GM12878 (cell line): ENCODE measurements at regions of chr7 and their contacts with region 1.

Region 1: GRCh38 chr7:85125651-85126131 is 61.2 kb downstream of the SEMA3D start:
- DNase-seq: no peak
- ATAC-seq: no peak
- H3K4me3 ChIP-seq: no peak overlapping the region
- H3K27ac ChIP-seq: no peak overlapping the region
- H3K4me1 ChIP-seq: no peaks in the 10 kb centered on the region
- H3K27me3 ChIP-seq: no peaks in the 10 kb centered on the region
- CTCF ChIP-seq: no peak
- EP300 ChIP-seq: no peak
- POLR2A ChIP-seq: no peak
- RAD21 ChIP-seq: no peak

Region 2: GRCh38 chr7:85070967-85071628 is 54.6 kb before region 1 on chr7:
- CTCF ChIA-PET with region 1: no interaction called
- POLR2A ChIA-PET with region 1: no interaction called
- RAD21 ChIA-PET with region 1: no interaction called
- SMC1A ChIA-PET with region 1: no interaction called
- in situ Hi-C with region 1: no loop called
- intact Hi-C with region 1: loop called (anchors 2 kb)
- DNase-seq: no peak
- ATAC-seq: no peak
- H3K4me3 ChIP-seq: no peak overlapping the region
- H3K27ac ChIP-seq: no peak overlapping the region
- H3K4me1 ChIP-seq: no peaks in the 10 kb centered on the region
- H3K27me3 ChIP-seq: no peaks in the 10 kb centered on the region
- CTCF ChIP-seq: no peak
- EP300 ChIP-seq: no peak
- POLR2A ChIP-seq: no peak
- RAD21 ChIP-seq: no peak

Region 3: DNA sequence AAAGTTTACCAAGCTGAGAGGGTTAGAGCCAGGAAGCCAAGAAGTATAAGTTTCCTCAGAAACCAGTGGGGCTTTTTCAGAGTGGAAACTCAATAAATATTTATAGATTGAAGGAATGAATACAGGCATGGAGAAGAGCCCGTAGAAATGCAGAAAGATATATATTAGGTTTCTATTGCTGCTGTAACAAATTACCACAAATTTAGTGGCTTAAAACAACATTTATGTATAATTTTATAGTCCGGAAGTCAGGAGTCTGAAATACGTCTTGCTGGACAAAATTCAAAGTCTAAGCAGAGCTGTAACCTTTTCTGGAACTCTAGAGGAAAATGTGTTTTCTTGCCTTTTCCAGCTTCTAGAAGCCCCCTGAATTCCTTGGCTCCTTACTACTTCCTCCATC is 168.5 kb after region 1 on chr7:
- CTCF ChIA-PET with region 1: no interaction called
- POLR2A ChIA-PET with region 1: no interaction called
- RAD21 ChIA-PET with region 1: no interaction called
- SMC1A ChIA-PET with region 1: no interaction called
- in situ Hi-C with region 1: no loop called
- intact Hi-C with region 1: no loop called
- DNase-seq: no peak
- ATAC-seq: no peak
- H3K4me3 ChIP-seq: no peak overlapping the region
- H3K27ac ChIP-seq: no peak overlapping the region
- H3K4me1 ChIP-seq: no peaks in the 10 kb centered on the region
- H3K27me3 ChIP-seq: no peaks in the 10 kb centered on the region
- CTCF ChIP-seq: no peak
- EP300 ChIP-seq: no peak
- POLR2A ChIP-seq: no peak
- RAD21 ChIP-seq: no peak